Activated naive CD4-positive, alpha-beta T cell treated with anti-CD3 and anti-CD28 coated beads for 36 hours (primary cell): ENCODE measurements at regions of chr2 and their contacts with region 1.

Region 1: DNA sequence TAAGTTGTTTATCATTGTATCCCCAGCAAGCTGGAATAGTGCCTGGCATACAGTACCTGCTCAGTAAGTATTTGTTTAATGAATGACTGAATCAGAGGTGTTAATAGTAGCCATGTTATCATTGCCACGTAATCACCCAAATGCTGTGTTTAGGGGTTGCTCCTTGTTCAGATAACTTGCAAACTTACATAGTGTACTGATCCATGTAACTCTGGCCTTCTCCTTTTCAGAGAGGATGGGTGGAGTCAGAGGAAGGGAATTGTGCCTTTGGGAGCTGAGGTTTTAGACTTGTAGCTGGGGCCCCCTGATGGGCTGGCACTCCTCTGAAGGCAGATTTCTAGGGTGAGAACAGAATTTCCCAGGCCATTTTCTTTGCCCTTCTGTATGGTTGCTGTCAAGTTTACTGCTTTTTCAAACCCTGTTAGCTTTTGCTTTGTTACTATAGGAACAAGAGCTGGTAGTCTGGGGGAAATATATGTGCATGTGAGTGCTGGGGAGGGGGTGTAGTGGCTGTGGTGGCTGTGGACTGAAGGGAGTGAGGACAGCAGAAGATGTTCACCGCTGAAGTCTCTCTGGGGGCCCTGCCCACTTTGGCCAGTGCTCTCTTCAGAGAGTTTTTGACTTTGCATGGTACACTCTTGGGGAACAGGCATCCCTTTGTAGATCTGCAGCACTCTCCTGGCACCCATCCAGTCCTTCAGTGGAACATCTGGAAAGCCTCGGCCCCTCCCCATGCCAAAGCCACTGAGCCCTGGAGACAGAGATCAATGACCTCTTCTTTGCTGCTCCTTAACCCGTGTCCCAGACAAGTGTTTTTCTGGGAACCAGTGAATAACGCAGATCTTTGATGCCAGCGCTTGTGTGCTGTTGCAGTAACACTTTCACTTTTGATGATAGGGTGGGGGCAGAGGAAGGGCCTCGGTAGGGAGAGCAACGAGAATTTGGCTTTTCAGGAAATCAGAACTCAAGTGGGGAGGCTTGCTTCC is 209.0 kb downstream of the PRKCE start:
- DNase-seq: peak; percentile 56
- H3K4me3 Mint-ChIP-seq: peak overlapping the region; percentile 56
- H3K27ac Mint-ChIP-seq: peak overlapping the region; percentile 73
- H3K4me1 Mint-ChIP-seq: peaks cover 42% of the 10 kb centered on the region
- H3K27me3 Mint-ChIP-seq: no peaks in the 10 kb centered on the region

Region 2: GRCh38 chr2:45650851-45651414 is 209.5 kb before region 1 on chr2:
- CTCF ChIA-PET with region 1: no interaction called
- intact Hi-C with region 1: loop called (anchors 2 kb)
- DNase-seq: peak; percentile 93
- H3K4me3 Mint-ChIP-seq: peak overlapping the region; percentile 95
- H3K27ac Mint-ChIP-seq: peak overlapping the region; percentile 91
- H3K4me1 Mint-ChIP-seq: peaks cover 22% of the 10 kb centered on the region
- H3K27me3 Mint-ChIP-seq: peaks cover 3% of the 10 kb centered on the region

Region 3: GRCh38 chr2:45889053-45889452 is 28.6 kb after region 1 on chr2:
- CTCF ChIA-PET with region 1: interaction called, 7 read pairs
- intact Hi-C with region 1: loop called (anchors 1 kb)
- DNase-seq: peak; percentile 73
- H3K4me3 Mint-ChIP-seq: no peak overlapping the region
- H3K27ac Mint-ChIP-seq: no peak overlapping the region
- H3K4me1 Mint-ChIP-seq: peaks cover 41% of the 10 kb centered on the region
- H3K27me3 Mint-ChIP-seq: no peaks in the 10 kb centered on the region

Region 4: DNA sequence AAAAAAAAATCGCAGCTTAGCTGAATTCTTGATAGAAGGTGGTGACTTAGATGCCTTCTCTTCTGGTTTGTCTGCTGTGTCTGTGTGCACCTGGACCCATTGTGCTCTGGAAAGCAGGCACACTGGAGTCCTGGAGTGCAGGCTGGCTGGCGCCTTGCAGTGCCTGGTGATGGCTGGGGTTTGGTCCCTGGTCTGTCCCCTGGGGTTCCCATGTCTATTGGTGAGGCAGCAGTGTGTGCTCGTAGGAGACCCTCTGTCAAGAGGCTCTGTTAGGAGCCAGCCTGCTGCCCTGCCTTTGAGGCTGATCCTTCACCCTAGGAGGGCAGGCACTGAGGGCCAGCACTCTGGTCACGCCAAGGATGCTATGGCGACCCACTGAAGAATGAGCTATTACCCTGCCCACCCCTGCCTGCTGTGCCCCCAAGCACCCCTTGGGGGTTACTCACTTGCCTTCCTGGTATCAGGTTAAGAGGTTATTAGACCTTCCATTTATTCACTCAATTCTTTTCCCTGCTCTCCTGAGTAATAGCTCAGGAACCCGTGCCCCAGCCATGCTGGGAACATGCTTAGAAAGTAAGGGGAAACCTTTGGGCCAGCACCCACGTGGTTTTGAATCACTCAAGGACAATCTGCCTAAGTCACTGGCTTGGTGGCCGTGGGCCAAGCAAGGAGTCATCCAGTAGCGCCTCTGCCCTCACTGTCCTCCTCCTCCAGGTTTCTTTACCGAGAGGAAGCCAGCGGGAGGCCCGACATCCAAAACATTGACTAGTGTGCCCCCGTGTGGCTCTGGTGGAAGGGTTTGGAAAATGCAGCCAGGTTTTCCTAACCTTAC is 75.6 kb after region 1 on chr2:
- CTCF ChIA-PET with region 1: no interaction called
- intact Hi-C with region 1: loop called (anchors 1 kb)
- DNase-seq: peak; percentile 76
- H3K4me3 Mint-ChIP-seq: no peak overlapping the region
- H3K27ac Mint-ChIP-seq: no peak overlapping the region
- H3K4me1 Mint-ChIP-seq: peaks cover 3% of the 10 kb centered on the region
- H3K27me3 Mint-ChIP-seq: no peaks in the 10 kb centered on the region